Activated CD4-positive, alpha-beta T cell treated with anti-CD3 and anti-CD28 coated beads for 36 hours (primary cell): ENCODE measurements at regions of chr12 and their contacts with region 1.

Region 1: DNA sequence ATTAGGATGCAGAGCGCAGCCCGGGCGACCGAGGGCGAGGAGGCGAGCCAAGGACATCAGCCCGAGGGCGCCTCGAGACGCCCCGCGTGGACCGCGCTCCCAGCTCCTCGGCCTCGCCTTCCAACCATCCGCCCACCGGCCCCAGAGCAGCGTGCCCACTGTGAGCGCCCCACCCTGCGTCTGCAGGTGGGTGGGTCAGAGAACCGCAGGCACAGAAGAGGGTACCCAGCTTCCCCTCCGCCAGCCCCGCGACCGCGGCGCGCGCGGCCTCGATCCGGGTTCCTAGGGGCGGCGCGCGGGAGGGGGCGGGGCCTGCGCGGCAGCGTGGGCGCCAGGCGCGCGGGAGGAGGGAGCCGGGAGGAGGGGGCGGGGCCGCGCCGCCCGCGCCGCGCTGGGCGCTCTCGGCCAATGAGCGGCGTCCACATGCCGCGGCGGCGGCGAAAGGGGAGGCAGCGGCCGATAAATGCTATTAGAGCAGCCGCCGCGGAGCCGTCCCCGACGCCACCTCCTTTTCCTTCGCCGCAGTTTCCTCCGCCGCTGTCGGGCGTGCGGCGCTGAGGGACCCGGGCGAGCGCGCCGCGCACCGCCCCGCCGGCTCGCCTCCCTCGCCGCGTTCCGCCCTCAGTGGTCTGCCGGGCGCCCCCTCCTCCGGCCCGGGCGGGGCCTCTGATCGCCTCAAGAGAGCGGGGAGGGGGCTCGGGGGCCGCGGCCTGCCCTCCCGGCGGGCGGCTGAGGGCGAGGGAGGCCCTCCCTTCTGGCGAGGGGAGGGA is at the start of gene ATP2A2:
- DNase-seq: peak; percentile 94
- ATAC-seq: peak; percentile 87
- H3K4me3 Mint-ChIP-seq: peak within 1 kb of the TSS; percentile 85
- H3K27ac Mint-ChIP-seq: peak within 1 kb of the TSS; percentile 86
- H3K4me1 Mint-ChIP-seq: peaks cover 40% of the 10 kb centered on the region
- H3K27me3 Mint-ChIP-seq: peaks cover 3% of the 10 kb centered on the region
- total RNA-seq, gene ATP2A2: 116 to 130 TPM

Region 2: GRCh38 chr12:109713187-109713984 is 567.6 kb before region 1 on chr12 and contains the start of gene FAM222A:
- CTCF ChIA-PET with region 1: no interaction called
- POLR2A ChIA-PET with region 1: no interaction called
- intact Hi-C with region 1: loop called in 1 of 2 experiments (anchors 1 kb)
- DNase-seq: peak; percentile 97
- ATAC-seq: peak; percentile 95
- H3K4me3 Mint-ChIP-seq: peak within 1 kb of the TSS; percentile 56
- H3K27ac Mint-ChIP-seq: no peak within 1 kb of the TSS
- H3K4me1 Mint-ChIP-seq: peaks cover 4% of the 10 kb centered on the region
- H3K27me3 Mint-ChIP-seq: peaks cover 25% of the 10 kb centered on the region
- total RNA-seq, gene FAM222A: 0.39 to 0.53 TPM

Region 3: DNA sequence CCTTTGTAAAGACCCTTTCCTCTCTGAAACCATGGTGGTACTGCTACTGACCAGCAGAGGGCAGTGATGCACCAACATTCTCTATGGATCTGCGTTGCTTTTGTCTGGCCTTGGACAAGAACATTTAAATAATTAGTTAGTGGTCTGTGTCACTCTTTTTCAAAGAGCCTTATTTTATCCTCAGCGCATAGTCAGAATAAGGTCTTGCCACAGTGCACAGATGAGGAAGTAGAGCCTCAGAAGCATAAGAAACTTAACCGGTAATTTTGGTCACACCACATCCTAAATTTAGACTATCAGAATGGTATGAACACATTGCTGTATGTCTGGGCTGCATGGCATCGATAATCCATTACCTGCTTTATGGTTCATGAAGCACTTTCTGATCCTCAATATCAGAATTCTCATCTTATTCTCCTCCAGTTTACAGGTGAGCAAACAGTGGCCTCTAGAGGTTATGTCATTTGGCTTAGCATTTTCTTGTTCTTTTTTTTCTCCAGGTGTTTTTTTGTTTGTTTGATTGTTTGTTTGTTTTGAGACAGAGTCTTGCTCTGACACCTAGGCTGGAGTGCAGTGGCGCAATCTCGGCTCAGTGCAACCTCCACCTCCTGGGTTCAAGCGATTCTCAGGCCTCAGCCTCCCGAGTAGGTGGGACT is 180.5 kb before region 1 on chr12:
- CTCF ChIA-PET with region 1: interaction called, 6 read pairs
- POLR2A ChIA-PET with region 1: interaction called, 12 read pairs
- intact Hi-C with region 1: loop called in 1 of 2 experiments (anchors 2 kb)
- DNase-seq: peak; percentile 77
- ATAC-seq: peak; percentile 70
- H3K4me3 Mint-ChIP-seq: no peak overlapping the region
- H3K27ac Mint-ChIP-seq: no peak overlapping the region
- H3K4me1 Mint-ChIP-seq: peaks cover 9% of the 10 kb centered on the region
- H3K27me3 Mint-ChIP-seq: no peaks in the 10 kb centered on the region

Region 4: GRCh38 chr12:110431957-110432587 is 151.1 kb after region 1 on chr12:
- CTCF ChIA-PET with region 1: interaction called, 6 read pairs
- POLR2A ChIA-PET with region 1: no interaction called
- intact Hi-C with region 1: loop called in 1 of 2 experiments (anchors 1 kb)
- DNase-seq: peak; percentile 54
- ATAC-seq: peak; percentile 45
- H3K4me3 Mint-ChIP-seq: peak overlapping the region; percentile 93
- H3K27ac Mint-ChIP-seq: no peak overlapping the region
- H3K4me1 Mint-ChIP-seq: peaks cover 11% of the 10 kb centered on the region
- H3K27me3 Mint-ChIP-seq: no peaks in the 10 kb centered on the region

Region 5: DNA sequence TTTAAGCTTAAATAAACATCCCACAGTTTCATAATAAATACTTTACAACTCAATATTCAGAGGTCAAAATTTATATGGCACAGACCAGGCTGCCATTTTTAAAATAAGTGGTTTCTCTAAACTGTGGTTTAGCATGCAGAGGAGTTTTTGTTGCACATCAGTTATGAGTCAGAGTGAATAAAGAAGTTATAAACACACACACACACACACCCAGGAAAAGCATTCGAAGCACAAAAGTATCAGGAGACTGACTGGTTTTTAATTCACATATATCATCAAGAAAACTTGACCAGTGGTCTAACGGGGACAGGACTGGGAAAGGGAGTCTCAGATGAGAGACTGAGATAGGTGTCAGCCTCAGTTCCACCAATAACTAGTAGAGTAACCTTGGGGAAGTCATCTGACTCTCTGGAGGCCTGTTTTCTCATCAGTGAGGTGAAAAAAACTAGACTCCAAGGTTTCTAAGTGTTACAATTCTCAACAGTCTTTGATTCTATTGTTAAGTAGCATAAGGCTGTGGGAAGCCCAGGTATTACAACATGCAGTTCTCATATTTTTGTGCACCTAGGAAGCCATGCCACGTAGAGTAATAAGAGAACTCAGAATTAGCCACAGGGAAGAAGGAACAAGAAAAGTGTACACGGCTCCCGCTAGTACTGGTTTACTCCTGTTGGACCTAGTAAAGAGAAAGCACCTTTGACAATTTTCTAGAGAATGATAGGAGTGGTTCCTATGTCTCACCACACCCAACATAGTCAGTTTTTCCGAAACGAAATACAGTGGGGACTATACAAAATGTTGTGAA is 297.0 kb after region 1 on chr12:
- CTCF ChIA-PET with region 1: interaction called, 3 read pairs
- POLR2A ChIA-PET with region 1: no interaction called
- intact Hi-C with region 1: loop called in 1 of 2 experiments (anchors 1 kb)
- DNase-seq: peak; percentile 61
- ATAC-seq: peak; percentile 67
- H3K4me3 Mint-ChIP-seq: peak overlapping the region; percentile 91
- H3K27ac Mint-ChIP-seq: peak overlapping the region; percentile 100
- H3K4me1 Mint-ChIP-seq: peaks cover 80% of the 10 kb centered on the region
- H3K27me3 Mint-ChIP-seq: no peaks in the 10 kb centered on the region